OCI-LY7 (cell line): ENCODE measurements at regions of chr15 and their contacts with region 1.

Region 1: DNA sequence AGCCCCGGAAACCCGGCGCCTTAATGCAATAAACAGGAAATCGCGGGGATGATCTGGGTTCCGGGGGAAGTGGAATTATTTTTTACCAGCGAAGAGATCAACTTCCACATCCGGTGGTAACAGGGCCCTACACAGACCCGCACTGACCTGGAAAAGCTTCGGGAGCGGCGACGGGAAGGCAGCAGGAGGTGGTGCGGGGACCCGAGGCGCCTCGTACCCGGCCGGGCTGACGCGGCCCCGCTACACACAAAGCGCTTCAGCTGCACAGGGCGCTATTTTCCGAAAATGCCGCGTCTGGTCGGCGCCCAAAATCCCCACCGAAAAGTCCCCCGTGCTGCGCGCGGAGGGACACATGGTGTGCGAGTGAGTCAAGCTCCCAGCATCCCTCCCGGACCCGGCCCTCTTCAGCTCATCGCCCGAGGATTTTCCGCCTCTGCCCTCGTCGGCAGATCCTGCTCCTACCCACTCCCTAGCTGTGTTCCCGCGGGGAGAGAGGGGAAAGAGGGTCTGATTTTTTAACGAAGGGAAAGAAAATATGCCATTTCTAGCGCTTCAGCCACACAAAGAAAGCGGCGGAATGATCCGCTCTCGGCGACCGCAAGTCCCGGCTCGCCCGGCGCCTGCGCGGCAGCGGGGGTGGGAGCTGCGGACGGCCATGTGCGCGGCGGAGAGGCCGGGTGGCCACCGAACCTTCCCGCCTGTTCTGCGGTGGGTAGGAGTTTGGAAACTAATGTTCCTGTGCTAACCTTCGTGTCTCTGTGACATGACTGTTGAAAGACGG is at the start of gene GABPB1:
- DNase-seq: peak; percentile 95
- H3K4me3 ChIP-seq: peak within 1 kb of the TSS; percentile 80
- H3K27ac ChIP-seq: peak within 1 kb of the TSS; percentile 90
- H3K4me1 ChIP-seq: peaks cover 43% of the 10 kb centered on the region
- CTCF ChIP-seq: no peak
- total RNA-seq, gene GABPB1: 53.3 and 55.8 TPM in 2 replicates

Region 2: GRCh38 chr15:49075885-49076284 is 1279.1 kb before region 1 on chr15:
- CTCF ChIA-PET with region 1: no interaction called
- POLR2A ChIA-PET with region 1: no interaction called
- intact Hi-C with region 1: no loop called
- DNase-seq: no peak
- H3K4me3 ChIP-seq: no peak overlapping the region
- H3K27ac ChIP-seq: no peak overlapping the region
- H3K4me1 ChIP-seq: no peaks in the 10 kb centered on the region
- CTCF ChIP-seq: no peak

Region 3: GRCh38 chr15:50302581-50302980 is 52.4 kb before region 1 on chr15:
- CTCF ChIA-PET with region 1: no interaction called
- POLR2A ChIA-PET with region 1: no interaction called
- intact Hi-C with region 1: no loop called
- DNase-seq: no peak
- H3K4me3 ChIP-seq: no peak overlapping the region
- H3K27ac ChIP-seq: no peak overlapping the region
- H3K4me1 ChIP-seq: peaks cover 7% of the 10 kb centered on the region
- CTCF ChIP-seq: no peak

Region 4: DNA sequence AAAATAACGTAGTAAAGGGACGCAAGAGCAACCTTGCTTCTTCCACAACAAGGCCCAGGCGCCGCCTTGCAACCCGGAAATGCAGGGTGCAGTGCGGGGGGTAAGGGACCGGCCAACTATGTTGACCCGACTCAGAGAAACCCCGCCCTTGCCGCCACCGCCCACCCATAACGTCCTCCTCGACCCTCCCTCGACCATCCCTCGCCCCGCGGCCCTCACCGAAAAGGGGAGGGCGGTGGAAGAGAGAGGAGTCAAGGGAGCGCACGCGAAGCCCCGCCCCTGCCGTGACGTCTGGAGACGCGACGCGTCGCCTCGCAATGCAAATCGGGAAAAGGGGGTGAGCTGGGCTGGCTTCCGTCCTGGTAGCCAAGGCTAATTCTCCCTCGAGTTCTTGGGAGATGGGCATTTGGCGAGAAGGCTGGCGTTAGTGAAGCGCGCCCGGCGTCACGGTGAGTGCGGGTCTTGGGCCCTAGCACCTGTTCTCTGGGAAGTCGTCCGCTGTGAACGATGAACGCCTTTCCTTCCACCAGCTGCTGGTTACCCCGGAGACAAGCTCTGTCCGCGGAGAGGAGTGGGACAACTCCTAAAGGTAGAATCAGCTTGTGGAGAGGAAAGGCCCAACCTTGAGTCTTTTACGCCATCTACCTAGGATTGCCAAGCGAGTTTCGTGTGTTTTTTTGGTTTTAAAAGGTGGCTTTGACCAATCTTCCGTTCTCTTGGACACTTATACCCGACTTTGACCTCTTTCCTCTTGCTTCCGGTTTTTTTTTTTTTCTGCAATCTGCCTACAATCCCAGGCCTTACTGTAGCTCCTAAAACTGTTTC is 69.2 kb after region 1 on chr15 and contains the start of gene USP8:
- CTCF ChIA-PET with region 1: interaction called, 3 read pairs
- POLR2A ChIA-PET with region 1: interaction called, 3 read pairs
- intact Hi-C with region 1: loop called (anchors 1 kb)
- DNase-seq: peak; percentile 98
- H3K4me3 ChIP-seq: peak within 1 kb of the TSS; percentile 89
- H3K27ac ChIP-seq: peak within 1 kb of the TSS; percentile 56
- H3K4me1 ChIP-seq: peaks cover 20% of the 10 kb centered on the region
- CTCF ChIP-seq: no peak
- total RNA-seq, gene USP8: 27.9 and 34.1 TPM in 2 replicates

Region 5: GRCh38 chr15:50440932-50441331 is 85.9 kb after region 1 on chr15:
- CTCF ChIA-PET with region 1: no interaction called
- POLR2A ChIA-PET with region 1: interaction called, 12 read pairs
- intact Hi-C with region 1: loop called (anchors 5 kb)
- DNase-seq: no peak
- H3K4me3 ChIP-seq: no peak overlapping the region
- H3K27ac ChIP-seq: no peak overlapping the region
- H3K4me1 ChIP-seq: peaks cover 15% of the 10 kb centered on the region
- CTCF ChIP-seq: no peak

Region 6: DNA sequence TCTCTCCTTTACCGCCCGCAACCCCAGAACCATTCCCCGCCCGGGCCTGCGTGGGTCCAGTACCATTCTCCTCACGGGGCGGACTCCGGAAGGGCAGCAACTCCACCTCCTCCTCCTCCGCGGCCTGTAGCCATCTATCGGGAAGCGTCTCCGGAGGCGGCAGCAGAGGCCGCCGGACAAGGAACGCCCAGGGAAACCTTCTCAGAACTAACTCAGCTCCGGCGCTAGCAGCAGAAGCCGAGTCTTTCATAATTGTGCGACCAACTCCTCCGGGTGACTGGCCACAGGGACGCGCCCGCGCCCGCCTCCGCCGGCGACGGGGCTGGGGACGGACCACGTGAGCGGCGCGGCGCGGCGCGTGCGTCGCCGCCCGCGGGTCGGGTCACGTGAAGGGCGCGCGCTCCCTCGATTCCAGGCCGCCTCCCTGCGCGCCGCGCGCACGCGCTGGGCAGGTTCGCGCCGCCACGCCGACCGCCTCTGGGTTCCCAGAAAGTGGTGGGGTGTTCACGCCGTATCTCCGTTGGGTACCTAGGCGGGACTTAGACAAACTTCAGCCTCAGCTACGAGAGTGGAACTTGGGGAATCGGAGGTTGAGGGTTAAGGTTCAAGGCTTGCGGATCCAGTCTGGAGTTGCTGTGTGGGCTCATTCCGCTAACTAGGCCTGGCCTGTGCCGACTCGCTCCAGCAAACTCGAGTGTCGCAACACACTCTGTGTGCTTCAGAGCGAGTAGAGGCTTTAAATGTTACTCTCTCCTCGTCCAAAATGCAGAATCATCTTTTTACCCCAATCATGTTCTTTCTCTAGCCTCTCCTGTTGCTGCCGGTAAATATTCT is 331.7 kb after region 1 on chr15 and contains the start of gene TRPM7:
- CTCF ChIA-PET with region 1: no interaction called
- POLR2A ChIA-PET with region 1: no interaction called
- intact Hi-C with region 1: loop called (anchors 10 kb)
- DNase-seq: peak; percentile 92
- H3K4me3 ChIP-seq: peak within 1 kb of the TSS; percentile 96
- H3K27ac ChIP-seq: peak within 1 kb of the TSS; percentile 76
- H3K4me1 ChIP-seq: peaks cover 22% of the 10 kb centered on the region
- CTCF ChIP-seq: no peak
- total RNA-seq, gene TRPM7: 49.3 and 50.0 TPM in 2 replicates

Region 7: DNA sequence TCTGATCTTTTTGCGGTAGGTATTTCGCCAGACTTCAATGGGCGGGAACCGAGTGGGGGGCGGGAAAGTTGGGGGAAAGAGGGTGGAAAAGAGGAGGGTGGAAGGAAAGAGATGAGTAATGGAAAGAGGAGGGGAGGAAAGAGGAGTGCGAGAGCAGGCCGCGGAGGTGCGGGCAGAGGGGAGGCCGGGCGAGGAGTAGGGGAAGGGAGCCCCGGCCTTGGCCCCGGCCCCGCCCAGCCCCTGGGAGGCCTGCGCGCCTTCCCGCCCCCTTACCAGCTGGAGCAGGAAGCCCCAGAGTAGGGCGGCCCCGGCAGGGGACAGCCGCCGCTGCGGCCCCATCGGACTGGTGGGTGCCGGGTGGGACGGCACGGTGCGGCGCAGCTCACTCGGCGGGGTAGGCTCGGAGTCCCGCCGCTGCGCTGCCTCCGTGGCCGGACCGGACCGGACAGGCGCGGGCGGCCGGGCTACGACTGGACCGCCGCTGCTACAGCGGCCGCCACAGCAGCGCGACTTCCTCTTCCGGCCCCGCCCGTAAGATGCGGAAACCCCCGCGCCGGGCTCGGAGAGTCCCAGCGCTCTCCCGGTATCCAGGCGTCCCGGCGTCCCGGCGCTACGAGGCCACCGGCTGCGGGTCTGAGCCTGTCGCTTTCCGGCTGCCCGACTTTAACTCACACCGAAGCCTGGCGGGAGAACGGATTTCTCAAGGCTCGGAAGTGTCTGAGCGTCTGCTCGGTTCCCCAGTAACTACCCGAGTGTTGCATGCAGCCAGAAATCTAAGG is 410.4 kb after region 1 on chr15 and contains the start of gene SPPL2A:
- CTCF ChIA-PET with region 1: no interaction called
- POLR2A ChIA-PET with region 1: interaction called, 3 read pairs
- intact Hi-C with region 1: loop called (anchors 5 kb)
- DNase-seq: peak; percentile 83
- H3K4me3 ChIP-seq: peak within 1 kb of the TSS; percentile 86
- H3K27ac ChIP-seq: peak within 1 kb of the TSS; percentile 57
- H3K4me1 ChIP-seq: peaks cover 16% of the 10 kb centered on the region
- CTCF ChIP-seq: no peak
- total RNA-seq, gene SPPL2A: 15.0 and 24.6 TPM in 2 replicates

Region 8: DNA sequence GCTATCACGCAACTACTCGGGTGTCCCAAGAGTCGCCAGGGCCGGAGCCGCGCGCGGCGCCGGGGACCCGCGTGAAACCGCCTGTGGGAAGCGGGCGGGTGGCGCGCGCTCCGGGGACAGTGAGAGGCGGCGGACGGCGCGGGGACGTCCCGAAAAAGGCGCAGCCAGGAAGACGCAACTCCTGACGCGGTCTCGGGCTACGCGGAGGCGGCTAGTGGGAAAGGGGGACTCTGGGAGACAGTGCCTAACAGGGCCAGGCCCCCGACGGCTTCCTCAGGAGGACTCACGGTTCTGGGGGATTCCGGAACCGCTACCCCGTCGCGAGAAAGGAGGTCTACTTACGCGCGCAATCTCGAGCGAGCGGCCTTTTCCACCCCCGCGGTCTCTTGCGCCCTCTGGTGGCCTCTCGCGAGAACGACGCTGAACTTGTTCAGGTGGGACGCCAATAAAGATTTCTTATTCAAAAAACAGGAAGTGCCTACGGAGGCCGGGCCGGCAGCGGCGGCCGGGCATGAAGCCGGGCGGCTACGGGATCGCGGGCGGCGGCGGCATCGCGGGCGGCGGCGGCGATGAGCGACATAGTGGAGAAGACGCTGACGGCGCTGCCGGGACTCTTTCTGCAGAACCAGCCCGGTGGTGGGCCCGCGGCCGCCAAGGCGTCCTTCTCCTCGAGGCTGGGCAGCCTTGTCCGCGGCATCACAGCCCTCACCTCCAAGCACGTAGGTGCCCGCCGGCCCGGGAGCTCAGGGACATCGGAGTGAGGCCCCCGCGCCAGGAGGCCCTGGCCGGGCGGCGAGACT is 553.4 kb after region 1 on chr15 and contains the start of gene AP4E1:
- CTCF ChIA-PET with region 1: no interaction called
- POLR2A ChIA-PET with region 1: interaction called, 3 read pairs
- intact Hi-C with region 1: loop called (anchors 2 kb)
- DNase-seq: peak; percentile 93
- H3K4me3 ChIP-seq: peak within 1 kb of the TSS; percentile 94
- H3K27ac ChIP-seq: peak within 1 kb of the TSS; percentile 51
- H3K4me1 ChIP-seq: peaks cover 15% of the 10 kb centered on the region
- CTCF ChIP-seq: peak; percentile 83
- total RNA-seq, gene AP4E1: 5.4 and 7.6 TPM in 2 replicates